ENCODE measurements at regions of chr6 and their contacts with region 1.

Region 1: DNA sequence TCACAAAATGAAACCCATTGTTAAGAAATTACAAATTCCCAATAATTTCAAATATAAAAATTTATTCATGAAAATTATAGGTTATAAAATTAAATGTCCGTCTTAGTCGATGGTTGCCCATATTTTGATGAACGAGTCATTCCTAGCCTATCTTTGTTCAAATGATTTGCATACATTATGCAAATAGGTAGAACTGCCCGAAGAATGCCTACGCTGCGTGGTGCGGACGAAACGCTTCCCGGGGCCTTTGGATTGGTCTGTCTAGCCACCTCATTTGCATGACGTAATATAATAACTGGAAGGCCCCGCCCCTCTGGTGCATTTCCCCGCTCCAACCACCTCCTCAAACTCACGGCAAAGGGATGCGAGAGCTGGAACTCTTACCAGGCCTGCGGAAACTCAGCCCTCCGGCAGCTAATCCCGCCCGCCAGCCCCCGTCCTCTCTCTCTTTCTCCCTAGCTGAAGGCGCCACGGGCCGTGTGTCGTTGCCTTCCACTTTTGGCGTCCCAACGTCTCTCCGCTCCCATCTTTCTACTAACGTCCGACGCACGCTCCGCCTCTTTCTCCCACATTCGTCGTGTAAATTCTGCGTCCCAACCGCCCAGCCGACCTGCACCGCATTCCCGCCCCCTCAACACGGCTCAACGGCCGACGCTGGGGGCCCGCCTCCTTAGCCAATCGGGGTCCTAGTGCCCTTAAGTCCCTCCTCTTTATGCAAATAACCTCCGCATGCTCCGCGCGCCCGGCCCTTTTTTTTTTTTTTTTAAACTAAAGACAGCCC is 520 bp upstream of the PRRC2A start:
- DNase-seq: peak; percentile 98 to 99
- ATAC-seq: peak; percentile 97
- H3K4me3 ChIP-seq: peak overlapping the region; percentile 11 to 22
- H3K27ac ChIP-seq: peak overlapping the region; percentile 59 to 89
- H3K4me1 ChIP-seq: no peaks in the 10 kb centered on the region
- H3K27me3 ChIP-seq: no peaks in the 10 kb centered on the region

Region 2: DNA sequence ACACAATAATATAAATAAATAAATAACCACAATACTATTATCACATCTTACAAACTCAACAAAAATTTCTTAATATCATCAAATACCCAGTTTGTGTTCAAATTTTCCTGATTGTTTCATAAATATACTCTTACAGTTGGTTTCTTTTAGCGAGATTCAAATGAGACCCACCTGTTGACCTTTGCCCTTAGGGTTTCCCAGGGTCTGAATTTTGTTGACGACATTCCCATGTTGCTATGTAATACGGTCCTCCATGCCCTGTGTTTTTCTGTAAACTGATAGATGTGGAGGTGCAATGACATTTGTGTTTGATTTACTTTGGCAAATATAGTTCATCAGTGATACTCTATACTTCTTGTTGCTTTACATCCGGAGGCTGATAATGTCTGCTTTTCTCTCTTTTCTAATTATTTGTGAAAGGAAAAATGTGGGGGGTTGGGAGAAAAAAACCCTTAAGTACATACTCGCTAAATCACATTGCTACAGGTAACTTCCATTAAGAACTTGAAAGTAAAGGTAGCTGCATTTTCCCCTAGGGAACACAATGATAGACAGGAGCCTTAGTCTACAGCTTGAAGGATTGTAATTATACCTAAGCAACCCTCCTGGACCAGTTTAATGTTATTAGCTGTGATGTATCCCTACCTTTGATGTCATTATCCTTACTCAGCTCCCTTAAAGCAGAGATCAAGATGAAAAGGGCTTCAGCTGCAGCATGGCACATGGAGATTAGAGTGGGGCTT is 1956.5 kb before region 1 on chr6:
- intact Hi-C with region 1: loop called in 1 of 2 experiments (anchors 5 kb)
- DNase-seq: no peak
- ATAC-seq: no peak
- H3K4me3 ChIP-seq: no peak overlapping the region
- H3K27ac ChIP-seq: no peak overlapping the region
- H3K4me1 ChIP-seq: no peaks in the 10 kb centered on the region
- H3K27me3 ChIP-seq: no peaks in the 10 kb centered on the region

Region 3: DNA sequence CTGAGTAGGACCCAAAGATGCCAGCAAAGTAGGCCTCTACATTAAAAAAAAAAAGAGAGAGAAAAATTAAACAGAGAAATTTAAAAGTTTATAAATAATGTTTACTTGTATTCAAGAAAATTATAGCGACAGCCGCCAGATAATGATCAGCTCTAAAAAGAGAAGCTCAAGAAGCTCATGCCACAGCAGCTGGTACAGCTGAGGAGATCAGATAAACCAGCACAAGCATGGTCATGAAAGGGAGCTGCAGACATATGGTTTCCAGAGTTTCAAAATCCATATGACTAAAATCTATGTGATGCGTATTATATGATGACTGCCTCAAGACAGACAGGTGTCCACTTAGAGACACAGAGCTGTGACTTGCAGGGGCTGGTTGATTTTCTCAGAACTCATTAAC is 334.5 kb before region 1 on chr6:
- intact Hi-C with region 1: loop called in 1 of 2 experiments (anchors 5 kb)
- DNase-seq: no peak
- ATAC-seq: no peak
- H3K4me3 ChIP-seq: no peak overlapping the region
- H3K27ac ChIP-seq: no peak overlapping the region
- H3K4me1 ChIP-seq: no peaks in the 10 kb centered on the region
- H3K27me3 ChIP-seq: peaks cover 0 to 2% of the 10 kb centered on the region in 2 donors

Region 4: DNA sequence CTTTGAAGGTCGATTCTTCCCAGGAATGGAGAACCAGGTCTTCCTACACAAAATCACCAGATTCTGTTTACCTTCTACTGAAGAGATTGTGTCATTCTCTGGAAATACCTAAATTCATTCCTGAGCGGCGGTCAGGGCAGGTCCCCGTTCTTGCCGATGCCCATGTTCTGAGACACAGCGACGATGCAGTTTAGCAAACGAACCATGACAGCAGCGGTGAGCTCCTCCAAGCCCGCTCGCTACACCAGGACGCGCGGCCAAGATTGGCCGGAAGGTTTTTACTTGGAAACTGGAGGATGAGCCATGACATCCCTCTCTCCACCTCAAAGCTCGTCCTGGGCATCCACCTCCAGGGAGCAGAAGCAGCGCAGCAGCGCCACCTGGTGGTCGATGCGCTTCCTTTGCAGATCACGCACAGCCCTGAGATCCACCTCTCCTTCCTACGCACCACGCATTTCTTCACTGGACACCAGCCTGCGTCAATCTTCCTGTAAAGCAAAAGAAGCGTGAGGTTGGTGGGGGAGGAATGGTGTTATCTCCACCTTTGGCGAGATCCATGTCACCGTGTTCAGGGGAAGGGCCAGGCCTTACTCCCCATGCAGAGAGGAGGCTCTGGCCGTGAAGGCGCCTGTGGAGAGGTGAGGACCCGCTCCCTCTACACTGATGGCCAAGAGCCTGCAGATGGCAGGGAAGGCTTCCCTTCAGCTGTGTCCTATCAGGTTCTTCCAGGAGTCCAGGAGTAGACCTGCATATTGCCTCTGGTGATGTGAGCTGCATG is 253.1 kb before region 1 on chr6:
- intact Hi-C with region 1: no loop called
- DNase-seq: peak; percentile 89 to 97
- ATAC-seq: peak; percentile 96
- H3K4me3 ChIP-seq: no peak overlapping the region
- H3K27ac ChIP-seq: no peak overlapping the region
- H3K4me1 ChIP-seq: no peaks in the 10 kb centered on the region
- H3K27me3 ChIP-seq: no peaks in the 10 kb centered on the region

Region 5: GRCh38 chr6:32046450-32047083 is 426.6 kb after region 1 on chr6:
- intact Hi-C with region 1: no loop called
- DNase-seq: peak; percentile 67 to 82
- ATAC-seq: peak; percentile 29
- H3K4me3 ChIP-seq: no peak overlapping the region
- H3K27ac ChIP-seq: no peak overlapping the region
- H3K4me1 ChIP-seq: no peaks in the 10 kb centered on the region
- H3K27me3 ChIP-seq: no peaks in the 10 kb centered on the region

Measured in aorta (tissue), 5 donors.